Dendritic cell treated with granulocyte-macrophage colony-stimulating factor and Interleukin-4, amounts not matched to agents 40 ng/mL and 50 ng/mL, for 4 days (primary cell): ENCODE measurements at regions of chr3 and their contacts with region 1.

Region 1: GRCh38 chr3:88003115-88003755 is 55.6 kb downstream of the CGGBP1 start:
- H3K4me3 Mint-ChIP-seq: no peak overlapping the region
- H3K27ac Mint-ChIP-seq: no peak overlapping the region
- H3K4me1 Mint-ChIP-seq: peaks cover 8% of the 10 kb centered on the region
- H3K27me3 Mint-ChIP-seq: no peaks in the 10 kb centered on the region

Region 2: GRCh38 chr3:87298111-87298718 is 705.0 kb before region 1 on chr3:
- intact Hi-C with region 1: loop called (anchors 1 kb)
- H3K4me3 Mint-ChIP-seq: no peak overlapping the region
- H3K27ac Mint-ChIP-seq: no peak overlapping the region
- H3K4me1 Mint-ChIP-seq: no peaks in the 10 kb centered on the region
- H3K27me3 Mint-ChIP-seq: no peaks in the 10 kb centered on the region

Region 3: GRCh38 chr3:87350364-87351199 is 652.7 kb before region 1 on chr3:
- intact Hi-C with region 1: loop called (anchors 1 kb)
- H3K4me3 Mint-ChIP-seq: no peak overlapping the region
- H3K27ac Mint-ChIP-seq: no peak overlapping the region
- H3K4me1 Mint-ChIP-seq: no peaks in the 10 kb centered on the region
- H3K27me3 Mint-ChIP-seq: no peaks in the 10 kb centered on the region

Region 4: GRCh38 chr3:87503900-87504508 is 499.2 kb before region 1 on chr3:
- intact Hi-C with region 1: loop called (anchors 10 kb)
- H3K4me3 Mint-ChIP-seq: no peak overlapping the region
- H3K27ac Mint-ChIP-seq: no peak overlapping the region
- H3K4me1 Mint-ChIP-seq: no peaks in the 10 kb centered on the region
- H3K27me3 Mint-ChIP-seq: no peaks in the 10 kb centered on the region

Region 5: DNA sequence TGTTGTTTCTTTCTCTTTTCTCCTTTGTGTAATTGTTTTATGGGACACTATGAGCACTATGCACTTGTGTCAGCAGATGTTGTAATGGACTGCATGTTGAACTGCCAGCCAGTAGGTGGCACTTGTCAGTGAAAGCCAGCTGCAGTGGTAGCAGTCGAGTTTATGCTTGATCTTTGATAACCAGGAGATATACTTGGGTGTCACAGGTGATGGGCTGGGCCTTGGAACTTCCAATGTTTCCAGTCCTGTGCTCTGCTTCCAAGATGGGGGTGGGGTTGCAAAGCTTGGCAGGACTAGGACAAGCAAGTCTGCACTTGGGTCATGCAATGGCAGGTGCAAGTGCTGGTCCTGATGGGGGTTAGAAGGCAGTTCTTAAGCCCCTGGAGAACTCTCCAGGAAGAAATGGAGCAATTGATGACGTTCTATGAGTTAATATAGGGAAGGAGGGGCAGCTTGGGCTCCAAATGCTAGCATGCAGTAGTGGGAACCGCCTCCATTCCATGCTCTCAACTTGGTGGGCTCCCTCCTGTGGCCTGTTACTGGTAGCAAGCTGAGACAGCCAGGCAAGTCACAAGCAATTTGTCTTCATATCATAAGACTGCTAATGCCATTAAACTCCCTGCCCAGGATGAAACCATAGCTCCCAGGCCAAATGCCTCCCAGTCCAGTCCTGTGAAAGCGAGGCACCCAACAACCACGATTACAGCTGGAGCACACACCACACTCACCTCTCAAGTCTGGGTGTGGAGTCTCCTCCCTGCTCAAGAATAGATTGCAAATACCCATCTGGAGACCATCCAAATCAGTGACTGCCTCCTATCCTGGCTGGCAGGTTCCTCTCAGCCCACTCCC is 231.7 kb before region 1 on chr3:
- intact Hi-C with region 1: loop called (anchors 1 kb)
- H3K4me3 Mint-ChIP-seq: no peak overlapping the region
- H3K27ac Mint-ChIP-seq: no peak overlapping the region
- H3K4me1 Mint-ChIP-seq: no peaks in the 10 kb centered on the region
- H3K27me3 Mint-ChIP-seq: no peaks in the 10 kb centered on the region

Region 6: GRCh38 chr3:88113311-88114162 is 110.3 kb after region 1 on chr3:
- intact Hi-C with region 1: loop called (anchors 5 kb)
- H3K4me3 Mint-ChIP-seq: no peak overlapping the region
- H3K27ac Mint-ChIP-seq: no peak overlapping the region
- H3K4me1 Mint-ChIP-seq: peaks cover 5% of the 10 kb centered on the region
- H3K27me3 Mint-ChIP-seq: no peaks in the 10 kb centered on the region